ENCODE measurements at regions of chr3 and their contacts with region 1.

Region 1: DNA sequence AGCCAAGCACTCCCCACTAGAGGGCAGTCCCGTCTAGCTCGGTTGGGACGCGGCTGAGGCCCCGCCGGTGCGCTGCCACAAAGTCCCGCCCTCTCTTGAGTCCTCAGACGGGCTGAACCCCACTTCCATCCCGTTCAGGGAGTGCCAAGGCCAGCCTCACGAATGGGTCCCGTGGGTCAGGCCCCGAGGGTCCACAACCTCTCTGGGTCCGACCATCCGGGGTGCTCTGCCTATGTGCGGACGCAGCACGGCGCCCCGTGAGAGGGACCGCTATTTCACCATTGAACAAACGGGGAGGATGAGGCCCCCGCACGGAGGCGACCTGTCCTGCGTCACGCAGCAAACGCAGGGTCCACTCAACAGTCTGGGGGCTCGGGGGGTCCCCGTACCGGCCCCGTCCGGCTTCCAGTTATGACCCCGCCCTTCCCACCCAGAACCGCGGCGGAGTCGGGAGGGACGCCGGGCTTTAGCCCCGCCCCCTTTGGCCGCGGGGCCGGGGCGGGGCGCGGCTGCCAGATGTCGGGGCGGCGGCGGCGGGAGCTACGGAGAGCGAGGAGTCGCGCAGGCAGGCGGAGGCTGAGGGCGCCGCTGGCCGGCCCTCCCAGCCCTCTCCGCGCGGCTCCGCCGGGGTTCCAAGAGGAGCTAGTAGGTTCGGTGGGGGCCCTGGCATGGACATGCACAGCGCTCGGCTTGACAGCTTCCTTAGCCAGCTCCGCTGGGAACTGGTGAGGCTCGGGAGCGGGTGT is at the start of gene INKA1:
- DNase-seq: peak; percentile 96
- H3K4me3 ChIP-seq: peak within 1 kb of the TSS; percentile 83 to 94
- H3K27ac ChIP-seq: peak within 1 kb of the TSS; percentile 31 to 98; a peak in 3 of 4 replicates
- H3K4me1 ChIP-seq: peaks cover 16 to 43% of the 10 kb centered on the region in 2 experiments
- H3K27me3 ChIP-seq: no peaks in the 10 kb centered on the region
- CTCF ChIP-seq: peak; percentile 84
- EP300 ChIP-seq: no peak
- RAD21 ChIP-seq: peak; percentile 93
- polyA plus RNA-seq, gene INKA1: 2.6 and 3.4 TPM in 2 replicates

Region 2: DNA sequence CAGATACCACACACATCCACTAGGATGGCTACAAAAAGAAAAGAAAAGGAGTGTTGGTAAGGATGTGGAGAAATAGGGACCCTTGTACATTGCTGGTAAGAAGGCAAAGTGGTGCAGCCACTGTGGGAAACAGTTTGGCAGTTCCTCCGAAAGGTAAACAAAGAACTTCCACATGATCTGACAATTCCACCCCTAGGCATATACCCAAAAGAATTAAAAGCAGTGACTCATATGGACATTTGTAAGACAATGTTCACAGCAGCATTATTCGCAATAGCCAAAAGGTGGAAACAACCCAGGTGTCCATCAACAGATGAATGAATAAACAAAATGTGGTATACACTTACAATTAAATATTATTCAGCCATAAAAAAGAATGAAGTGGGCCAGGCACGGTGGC is 56.9 kb before region 1 on chr3:
- CTCF ChIA-PET with region 1: no interaction called
- POLR2A ChIA-PET with region 1: no interaction called
- DNase-seq: no peak
- H3K4me3 ChIP-seq: no peak overlapping the region
- H3K27ac ChIP-seq: no peak overlapping the region
- H3K4me1 ChIP-seq: no peaks in the 10 kb centered on the region
- H3K27me3 ChIP-seq: no peaks in the 10 kb centered on the region
- CTCF ChIP-seq: no peak
- EP300 ChIP-seq: no peak
- RAD21 ChIP-seq: no peak

Region 3: GRCh38 chr3:49813497-49814174 is 10.7 kb after region 1 on chr3 and contains the start of gene UBA7:
- CTCF ChIA-PET with region 1: interaction called, 11 read pairs
- POLR2A ChIA-PET with region 1: no interaction called
- DNase-seq: no peak
- H3K4me3 ChIP-seq: peak within 1 kb of the TSS; percentile 22 to 51; a peak in 3 of 4 replicates
- H3K27ac ChIP-seq: peak within 1 kb of the TSS; percentile 42 to 63; a peak in 3 of 4 replicates
- H3K4me1 ChIP-seq: peaks cover 0 to 28% of the 10 kb centered on the region in 2 experiments; a peak in 1 of 4 replicates
- H3K27me3 ChIP-seq: no peaks in the 10 kb centered on the region
- CTCF ChIP-seq: no peak
- EP300 ChIP-seq: no peak
- RAD21 ChIP-seq: no peak
- polyA plus RNA-seq, gene UBA7: 22.6 and 25.8 TPM in 2 replicates

Region 4: DNA sequence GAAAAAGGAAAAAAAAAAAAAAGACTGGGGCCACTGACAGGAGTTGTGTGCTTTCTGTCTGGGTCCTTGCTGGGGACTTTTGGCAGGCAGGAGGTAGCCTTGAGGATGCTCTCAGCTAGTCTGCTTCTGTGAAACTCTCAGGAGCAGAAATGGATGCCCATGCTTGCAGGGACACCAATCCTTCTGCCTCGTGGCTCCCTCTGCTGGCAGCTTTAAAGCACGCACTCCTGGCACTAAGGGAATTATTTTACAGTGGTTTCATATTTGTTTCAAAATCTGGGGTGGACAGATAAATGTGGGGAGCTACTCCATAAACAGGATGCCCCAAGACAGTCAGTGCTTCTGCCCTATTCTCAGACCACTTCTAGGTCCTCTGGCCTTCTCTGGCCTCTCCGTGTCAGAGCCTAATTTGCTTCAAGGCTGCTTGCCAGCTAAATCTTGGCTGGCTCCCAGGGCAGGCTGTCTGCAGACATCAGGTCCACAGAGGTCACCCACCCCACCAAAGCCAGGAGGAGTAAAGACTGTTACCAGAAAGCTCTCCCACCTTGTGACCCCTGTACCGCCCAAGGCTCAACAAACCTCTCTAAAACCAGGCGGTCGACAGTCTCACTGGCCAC is 36.4 kb after region 1 on chr3:
- CTCF ChIA-PET with region 1: interaction called, 386 read pairs
- POLR2A ChIA-PET with region 1: interaction called, 37 read pairs
- DNase-seq: peak; percentile 74
- H3K4me3 ChIP-seq: no peak overlapping the region; a peak in 1 of 4 replicates
- H3K27ac ChIP-seq: peak overlapping the region in 1 of 2 experiments; percentile 93; a peak in 2 of 4 replicates
- H3K4me1 ChIP-seq: peaks cover 0 to 48% of the 10 kb centered on the region in 2 experiments; a peak in 1 of 4 replicates
- H3K27me3 ChIP-seq: no peaks in the 10 kb centered on the region
- CTCF ChIP-seq: peak; percentile 97
- EP300 ChIP-seq: no peak
- RAD21 ChIP-seq: peak; percentile 88

Region 5: DNA sequence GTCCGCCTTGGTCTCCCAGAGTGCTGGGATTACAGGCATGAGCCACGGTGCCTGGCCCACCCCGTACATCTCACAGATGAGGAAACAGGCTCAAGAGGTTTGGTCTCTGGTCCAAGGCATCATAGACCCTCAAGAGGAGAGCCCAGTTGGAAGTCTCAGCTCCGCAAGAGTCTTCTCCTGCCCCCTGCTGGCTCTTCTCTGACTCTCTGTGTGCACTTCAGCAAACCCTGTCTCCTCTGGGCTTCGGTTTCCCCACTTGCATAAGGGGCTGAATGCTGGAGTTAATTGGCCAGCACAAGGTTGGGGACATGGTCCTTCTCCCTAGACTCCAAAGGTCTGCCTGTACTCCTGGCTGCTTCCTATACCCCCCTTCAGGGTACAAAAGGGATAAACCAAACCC is 96.9 kb after region 1 on chr3:
- CTCF ChIA-PET with region 1: interaction called, 24 read pairs
- POLR2A ChIA-PET with region 1: interaction called, 5 read pairs
- DNase-seq: peak; percentile 58
- H3K4me3 ChIP-seq: no peak overlapping the region
- H3K27ac ChIP-seq: no peak overlapping the region
- H3K4me1 ChIP-seq: peaks cover 0 to 6% of the 10 kb centered on the region in 2 experiments; a peak in 1 of 4 replicates
- H3K27me3 ChIP-seq: no peaks in the 10 kb centered on the region
- CTCF ChIP-seq: peak; percentile 27; the same call in 1 of the 2 replicates
- EP300 ChIP-seq: no peak
- RAD21 ChIP-seq: peak; percentile 60

Region 6: GRCh38 chr3:49939858-49940666 is 137.2 kb after region 1 on chr3 and contains the start of gene RBM6:
- CTCF ChIA-PET with region 1: interaction called, 7 read pairs
- POLR2A ChIA-PET with region 1: interaction called, 13 read pairs
- DNase-seq: peak; percentile 97
- H3K4me3 ChIP-seq: peak within 1 kb of the TSS; percentile 71 to 100
- H3K27ac ChIP-seq: peak within 1 kb of the TSS; percentile 94 to 96
- H3K4me1 ChIP-seq: no peaks in the 10 kb centered on the region; a peak in 1 of 4 replicates
- H3K27me3 ChIP-seq: no peaks in the 10 kb centered on the region
- CTCF ChIP-seq: no peak
- EP300 ChIP-seq: no peak
- RAD21 ChIP-seq: no peak
- polyA plus RNA-seq, gene RBM6: 67.4 and 85.5 TPM in 2 replicates

Region 7: DNA sequence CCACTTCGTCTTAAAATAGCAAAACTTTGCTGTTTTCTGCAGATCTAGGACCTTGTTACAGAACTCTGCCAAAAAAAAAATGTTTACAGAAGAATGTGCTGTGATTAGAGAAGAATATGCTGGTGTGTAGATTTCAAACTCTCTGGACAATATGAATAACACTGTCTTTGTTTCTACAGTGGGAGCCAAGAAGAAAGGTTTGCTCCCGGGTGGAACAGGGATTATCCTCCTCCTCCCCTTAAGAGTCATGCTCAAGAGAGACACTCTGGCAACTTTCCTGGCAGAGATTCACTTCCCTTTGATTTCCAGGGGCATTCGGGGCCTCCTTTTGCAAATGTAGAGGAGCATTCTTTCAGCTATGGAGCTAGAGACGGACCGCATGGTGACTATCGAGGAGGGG is 164.4 kb after region 1 on chr3:
- CTCF ChIA-PET with region 1: no interaction called
- POLR2A ChIA-PET with region 1: no interaction called
- DNase-seq: no peak
- H3K4me3 ChIP-seq: no peak overlapping the region
- H3K27ac ChIP-seq: no peak overlapping the region
- H3K4me1 ChIP-seq: no peaks in the 10 kb centered on the region
- H3K27me3 ChIP-seq: no peaks in the 10 kb centered on the region
- CTCF ChIP-seq: no peak
- EP300 ChIP-seq: no peak
- RAD21 ChIP-seq: no peak

Measured in SK-N-SH (cell line).